Activated B cell treated with CpG ODN at 0.5 μM for 24 hours (primary cell): ENCODE measurements at regions of chr6 and their contacts with region 1.

Region 1: DNA sequence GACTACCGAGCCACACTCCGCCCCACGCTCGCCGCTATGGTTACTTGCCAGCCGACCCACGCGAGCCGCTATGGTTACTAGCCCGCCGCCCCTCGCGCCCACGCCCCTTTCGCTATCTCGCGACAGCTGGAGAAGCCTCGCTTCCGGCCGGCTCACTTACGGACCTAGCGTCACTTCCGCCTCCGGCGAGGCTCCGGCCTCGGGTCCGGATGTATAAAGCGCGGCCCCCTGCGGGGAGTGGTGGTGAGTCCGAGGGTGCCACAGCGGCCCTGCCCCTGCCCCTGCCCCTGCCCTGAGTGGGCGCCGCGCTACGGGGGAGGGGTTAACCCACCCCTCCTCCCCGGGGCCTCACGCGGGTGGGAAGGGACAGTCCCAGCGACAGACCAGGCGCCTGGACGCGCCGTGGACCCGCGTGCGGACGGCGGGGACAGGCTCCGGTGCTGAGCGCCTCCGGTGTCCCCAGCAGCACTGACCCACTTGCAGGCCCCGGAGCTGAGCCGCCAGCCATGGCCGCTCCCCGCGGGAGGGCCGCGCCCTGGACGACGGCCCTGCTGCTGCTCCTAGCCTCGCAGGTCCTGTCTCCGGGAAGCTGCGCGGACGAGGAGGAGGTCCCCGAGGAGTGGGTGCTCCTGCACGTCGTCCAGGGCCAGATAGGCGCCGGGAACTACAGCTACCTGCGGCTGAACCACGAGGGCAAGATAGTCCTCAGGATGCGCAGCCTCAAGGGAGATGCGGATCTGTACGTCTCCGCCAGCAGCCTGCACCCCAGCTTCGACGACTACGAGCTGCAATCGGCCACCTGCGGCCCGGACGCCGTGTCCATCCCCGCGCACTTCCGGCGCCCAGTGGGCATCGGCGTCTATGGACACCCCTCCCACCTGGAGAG is at the starts of genes C6orf120 and WDR27:
- DNase-seq: peak; percentile 96
- ATAC-seq: peak; percentile 87
- H3K4me3 Mint-ChIP-seq: peak within 1 kb of the TSS; percentile 92
- H3K27ac Mint-ChIP-seq: peak within 1 kb of the TSS; percentile 88
- H3K4me1 Mint-ChIP-seq: peaks cover 51% of the 10 kb centered on the region
- H3K27me3 Mint-ChIP-seq: no peaks in the 10 kb centered on the region
- CTCF ChIP-seq: no peak
- total RNA-seq, gene C6orf120: 21.7 and 24.8 TPM in 2 replicates
- total RNA-seq, gene WDR27: 36.8 and 49.1 TPM in 2 replicates

Region 2: DNA sequence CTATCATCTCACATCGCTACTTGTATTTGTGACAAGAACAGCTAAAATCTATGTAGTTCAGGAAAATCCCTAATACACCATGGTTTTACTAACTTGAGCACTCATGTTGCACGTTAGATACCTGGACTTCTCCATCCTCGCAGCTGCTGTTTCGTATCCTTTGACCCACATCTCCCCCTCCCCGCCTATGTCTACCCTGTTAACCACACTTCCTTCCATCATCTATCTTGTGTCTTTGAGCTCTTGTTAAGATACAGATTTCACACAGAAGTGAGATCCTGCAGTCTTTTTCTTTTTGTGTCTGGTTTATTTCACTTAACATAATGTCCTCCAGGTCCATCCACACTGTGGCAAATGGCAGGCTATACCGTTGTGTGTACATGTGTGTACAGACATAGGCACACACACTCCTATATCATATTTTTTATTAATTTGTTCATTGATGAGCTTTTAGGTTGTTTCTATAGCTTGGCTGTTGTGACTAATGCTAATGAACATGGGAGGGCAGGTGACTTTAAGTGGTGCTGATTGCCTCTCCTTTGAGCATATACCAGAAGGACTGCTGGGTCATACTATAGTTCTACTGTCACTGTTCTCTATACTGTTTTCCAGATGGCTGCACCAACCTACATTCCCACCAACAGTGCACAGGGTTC is 118.2 kb before region 1 on chr6:
- CTCF ChIA-PET with region 1: no interaction called
- POLR2A ChIA-PET with region 1: no interaction called
- intact Hi-C with region 1: loop called (anchors 2 kb)
- DNase-seq: no peak
- ATAC-seq: peak; percentile 68
- H3K4me3 Mint-ChIP-seq: peak overlapping the region; percentile 36
- H3K27ac Mint-ChIP-seq: peak overlapping the region; percentile 4
- H3K4me1 Mint-ChIP-seq: peaks cover 53% of the 10 kb centered on the region
- H3K27me3 Mint-ChIP-seq: no peaks in the 10 kb centered on the region
- CTCF ChIP-seq: no peak

Region 3: DNA sequence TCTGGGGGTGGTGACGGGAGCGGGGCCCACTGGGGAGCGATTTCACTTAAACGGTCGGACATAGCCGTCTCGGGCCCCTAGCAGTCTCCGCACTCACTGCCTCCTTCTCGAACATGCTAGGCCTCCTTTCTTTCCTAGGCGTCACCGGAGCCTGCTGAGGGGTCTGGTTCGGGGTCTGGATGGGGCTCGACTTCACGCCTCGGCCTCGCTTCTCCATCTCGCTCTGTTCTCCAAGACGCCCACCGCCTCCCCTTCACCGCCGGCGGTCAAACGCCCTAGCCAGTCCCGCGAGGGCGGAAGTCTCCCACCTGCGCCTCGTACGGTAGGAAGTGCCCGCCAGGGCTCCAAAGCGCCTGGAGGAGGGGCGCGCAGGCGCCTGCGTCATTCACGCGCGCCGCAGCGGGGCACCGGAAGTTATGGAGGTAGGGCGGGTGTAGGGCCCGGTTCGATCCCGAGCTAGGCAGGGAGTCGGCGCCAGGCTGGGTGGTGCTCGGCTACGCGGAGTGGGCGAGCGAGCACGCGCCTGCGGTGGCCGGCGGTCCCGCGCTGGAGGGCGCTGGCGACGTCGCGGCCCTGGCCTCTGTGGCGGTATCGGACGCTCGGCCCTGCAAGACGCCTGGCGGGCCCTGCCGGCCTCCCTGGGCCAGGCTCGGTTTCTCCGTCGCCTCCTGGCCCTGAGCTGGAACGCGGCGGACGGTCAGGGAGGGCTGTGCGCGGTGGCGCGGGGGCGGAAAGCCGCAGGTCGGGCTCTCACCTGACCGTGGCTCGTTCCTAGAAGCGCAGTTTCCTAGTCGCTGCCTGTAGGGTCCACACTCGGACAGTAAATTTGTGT is 49.3 kb after region 1 on chr6 and contains the starts of genes DYNLT2 and ERMARD:
- CTCF ChIA-PET with region 1: interaction called, 3 read pairs
- POLR2A ChIA-PET with region 1: interaction called, 54 read pairs
- intact Hi-C with region 1: loop called (anchors 1 kb)
- DNase-seq: peak; percentile 98
- ATAC-seq: peak; percentile 93
- H3K4me3 Mint-ChIP-seq: peak within 1 kb of the TSS; percentile 95
- H3K27ac Mint-ChIP-seq: peak within 1 kb of the TSS; percentile 97
- H3K4me1 Mint-ChIP-seq: peaks cover 30% of the 10 kb centered on the region
- H3K27me3 Mint-ChIP-seq: no peaks in the 10 kb centered on the region
- CTCF ChIP-seq: no peak
- total RNA-seq, gene DYNLT2: 3.7 and 4.4 TPM in 2 replicates
- total RNA-seq, gene ERMARD: 33.5 and 45.4 TPM in 2 replicates

Region 4: DNA sequence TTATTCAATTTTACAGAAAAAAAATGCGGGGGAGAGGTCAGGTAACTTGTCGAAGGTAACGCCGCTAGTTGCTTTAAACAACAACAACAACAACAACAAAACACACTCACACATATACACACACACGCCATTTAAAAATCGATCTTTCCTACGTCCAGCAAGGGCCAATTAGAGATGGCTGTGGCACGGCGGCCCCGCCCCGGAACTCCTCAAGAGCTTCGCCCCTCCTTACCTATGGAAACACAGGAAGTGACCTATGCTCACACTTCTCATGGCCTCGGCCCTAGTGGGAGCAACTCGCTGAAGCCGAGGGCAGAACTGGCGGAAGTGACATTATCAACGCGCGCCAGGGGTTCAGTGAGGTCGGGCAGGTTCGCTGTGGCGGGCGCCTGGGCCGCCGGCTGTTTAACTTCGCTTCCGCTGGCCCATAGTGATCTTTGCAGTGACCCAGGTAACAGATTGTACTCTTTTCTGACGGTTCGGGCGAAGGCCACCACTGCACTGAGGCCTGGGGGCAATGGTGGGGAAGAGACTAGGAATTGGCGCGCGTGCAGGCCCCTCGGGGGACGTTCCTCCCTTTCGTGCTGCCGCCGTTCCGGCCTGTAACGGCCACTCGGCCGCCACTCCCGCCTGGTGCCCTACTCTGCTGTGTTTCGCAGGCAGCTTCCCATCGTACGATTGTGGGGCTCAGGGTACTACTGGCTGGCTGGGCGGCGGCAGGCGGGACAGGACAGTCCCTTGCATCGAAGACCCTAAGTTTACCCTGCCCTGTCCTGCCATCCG is 852.0 kb after region 1 on chr6 and contains the start of gene TBP:
- CTCF ChIA-PET with region 1: no interaction called
- POLR2A ChIA-PET with region 1: interaction called, 24 read pairs
- intact Hi-C with region 1: loop called (anchors 1 kb)
- DNase-seq: peak; percentile 93
- ATAC-seq: peak; percentile 94
- H3K4me3 Mint-ChIP-seq: no peak within 1 kb of the TSS
- H3K27ac Mint-ChIP-seq: no peak within 1 kb of the TSS
- H3K4me1 Mint-ChIP-seq: peaks cover 25% of the 10 kb centered on the region
- H3K27me3 Mint-ChIP-seq: no peaks in the 10 kb centered on the region
- CTCF ChIP-seq: no peak
- total RNA-seq, gene TBP: 19.4 and 21.6 TPM in 2 replicates